Heart right ventricle (tissue), 16 donors: ENCODE measurements at regions of chr4 and their contacts with region 1.

Region 1: GRCh38 chr4:140982613-140983340 is 150.5 kb downstream of the RNF150 start:
- DNase-seq: no peak
- ATAC-seq: peak in 7 of 8 donors; percentile 39 to 88 (median 79)
- H3K4me3 ChIP-seq: no peak overlapping the region
- H3K27ac ChIP-seq: peak overlapping the region in 6 of 10 donors; percentile 1 to 77 (median 56)
- H3K4me1 ChIP-seq: peaks cover 0 to 59% (median 12%) of the 10 kb centered on the region in 9 donors
- H3K27me3 ChIP-seq: no peaks in the 10 kb centered on the region
- CTCF ChIP-seq: peak in 1 of 9 donors; percentile 4

Region 2: DNA sequence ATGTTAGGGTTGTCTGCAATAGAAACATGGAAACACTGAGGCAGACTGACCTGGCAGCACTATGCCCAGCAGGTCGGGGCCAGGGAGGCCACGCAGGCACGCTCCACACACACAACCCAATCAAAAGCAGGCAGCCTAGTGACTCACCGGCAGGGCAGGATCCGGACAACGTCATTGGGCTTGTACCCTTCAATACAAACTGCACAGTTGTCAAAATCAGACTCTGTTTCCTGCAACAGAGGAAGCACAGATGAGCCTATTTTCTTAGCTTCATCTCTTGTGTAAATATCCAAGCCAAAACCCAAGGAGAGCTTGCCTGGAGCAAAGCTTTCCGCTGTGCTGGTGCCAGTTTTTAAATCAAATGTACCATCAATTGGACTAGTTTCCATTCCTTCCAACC is 35.3 kb before region 1 on chr4:
- intact Hi-C with region 1: loop called in 1 of 10 experiments (anchors 5 kb)
- DNase-seq: no peak
- ATAC-seq: peak in 4 of 8 donors; percentile 50 to 88 (median 75)
- H3K4me3 ChIP-seq: no peak overlapping the region
- H3K27ac ChIP-seq: no peak overlapping the region
- H3K4me1 ChIP-seq: peaks cover 0 to 40% (median 9%) of the 10 kb centered on the region in 9 donors
- H3K27me3 ChIP-seq: no peaks in the 10 kb centered on the region
- CTCF ChIP-seq: no peak